ENCODE measurements at regions of chr15 and their contacts with region 1.

Region 1: DNA sequence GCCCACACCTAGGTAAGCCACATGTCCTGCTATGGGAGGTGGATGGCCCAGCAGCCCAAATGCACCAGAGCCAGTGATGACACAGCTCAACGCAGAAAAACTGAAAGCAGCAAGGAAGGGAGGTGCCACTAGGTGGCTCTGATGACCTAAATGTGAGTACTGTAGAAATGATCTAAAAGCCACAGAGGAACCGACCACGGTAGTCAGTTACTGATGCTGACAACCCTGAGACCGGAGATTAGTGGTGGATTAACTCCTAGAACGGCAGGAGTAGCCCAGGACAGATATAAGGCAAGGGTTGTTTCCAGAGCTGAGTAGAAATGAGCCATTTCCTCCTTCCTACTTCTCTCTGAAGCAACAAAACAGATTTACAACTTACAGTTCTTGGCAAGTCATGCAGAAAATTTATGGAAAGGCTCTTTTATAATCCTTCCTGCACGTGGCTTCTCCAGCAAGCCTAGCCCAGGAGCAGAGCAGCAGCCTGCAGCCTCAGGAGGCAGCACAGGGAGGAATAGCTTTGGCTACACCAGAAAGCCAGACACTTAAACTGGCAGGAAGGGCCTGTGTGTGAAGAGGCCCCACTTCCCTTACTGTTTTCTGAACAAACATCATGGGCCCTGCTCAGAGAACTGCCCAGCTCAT is 13.1 kb downstream of the FBXL22 start:
- DNase-seq: peak in 8 of 9 donors; percentile 43 to 71 (median 64)
- ATAC-seq: peak; percentile 94
- H3K4me3 ChIP-seq: no peak overlapping the region
- H3K4me3 Mint-ChIP-seq: peak overlapping the region in 7 of 10 donors; percentile 9 to 68 (median 42)
- H3K27ac ChIP-seq: peak overlapping the region; percentile 69
- H3K27ac Mint-ChIP-seq: peak overlapping the region; percentile 74 to 94 (median 84)
- H3K4me1 ChIP-seq: peaks cover 23 to 25% of the 10 kb centered on the region in 2 donors
- H3K4me1 Mint-ChIP-seq: peaks cover 23 to 51% (median 41%) of the 10 kb centered on the region in 7 donors
- H3K27me3 ChIP-seq: no peaks in the 10 kb centered on the region
- H3K27me3 Mint-ChIP-seq: no peaks in the 10 kb centered on the region

Region 2: DNA sequence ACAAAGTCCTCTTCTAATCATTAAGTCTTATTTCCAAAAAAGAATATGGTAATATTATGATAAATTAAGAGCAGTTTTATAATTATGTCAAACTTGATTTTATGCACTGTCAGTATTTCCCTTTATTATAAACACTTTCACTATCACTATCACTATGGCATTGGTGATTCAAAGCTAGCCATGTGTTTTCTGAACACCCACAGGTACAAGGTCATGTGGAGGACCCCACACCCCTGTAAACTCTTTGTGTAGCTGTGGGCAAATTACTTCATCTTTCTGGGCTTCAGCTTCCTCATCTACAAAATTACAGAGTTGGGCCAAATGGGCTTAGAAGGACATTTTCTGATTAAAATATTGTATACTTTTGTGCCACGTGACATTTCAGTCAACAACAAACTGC is 28.5 kb after region 1 on chr15:
- CTCF ChIA-PET with region 1: interaction called, 5 read pairs
- POLR2A ChIA-PET with region 1: no interaction called
- intact Hi-C with region 1: loop called in 1 of 2 experiments (anchors 2 kb)
- DNase-seq: no peak
- ATAC-seq: no peak
- H3K4me3 ChIP-seq: no peak overlapping the region
- H3K4me3 Mint-ChIP-seq: no peak overlapping the region
- H3K27ac ChIP-seq: no peak overlapping the region
- H3K27ac Mint-ChIP-seq: peak overlapping the region in 3 of 9 donors; percentile 26 to 72 (median 38)
- H3K4me1 ChIP-seq: no peaks in the 10 kb centered on the region
- H3K4me1 Mint-ChIP-seq: peaks cover 0 to 11% (median 0%) of the 10 kb centered on the region in 7 donors
- H3K27me3 ChIP-seq: no peaks in the 10 kb centered on the region
- H3K27me3 Mint-ChIP-seq: no peaks in the 10 kb centered on the region

Measured in naive thymus-derived CD4-positive, alpha-beta T cell (primary cell).